ENCODE measurements at regions of chr4 and their contacts with region 1.

Region 1: DNA sequence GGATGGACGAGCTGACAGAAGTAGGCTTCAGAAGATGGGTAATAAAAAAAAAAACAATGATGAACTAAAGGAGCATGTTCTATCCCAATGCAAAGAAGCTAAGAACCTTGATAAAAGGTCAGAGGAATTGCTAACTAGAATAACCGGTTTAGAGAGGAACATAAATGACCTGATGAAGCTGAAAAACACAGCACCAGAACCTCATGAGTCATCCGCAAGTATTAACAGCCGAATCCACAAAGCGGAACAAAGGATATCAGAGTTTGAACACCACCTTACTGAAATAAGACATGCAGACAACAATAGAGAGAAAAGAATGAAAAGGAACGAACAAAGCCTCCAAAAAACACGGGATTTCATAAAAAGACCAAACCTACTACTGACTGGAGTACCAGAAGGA is 10.5 kb downstream of the NELFA start:
- DNase-seq: no peak
- H3K4me3 Mint-ChIP-seq: no peak overlapping the region
- H3K27ac Mint-ChIP-seq: no peak overlapping the region
- H3K4me1 Mint-ChIP-seq: peaks cover 6% of the 10 kb centered on the region
- H3K27me3 Mint-ChIP-seq: no peaks in the 10 kb centered on the region
- CTCF ChIP-seq: no peak

Region 2: GRCh38 chr4:1777822-1778641 is 220.3 kb before region 1 on chr4:
- CTCF ChIA-PET with region 1: no interaction called
- POLR2A ChIA-PET with region 1: no interaction called
- intact Hi-C with region 1: no loop called
- DNase-seq: peak; percentile 62
- H3K4me3 Mint-ChIP-seq: no peak overlapping the region
- H3K27ac Mint-ChIP-seq: no peak overlapping the region
- H3K4me1 Mint-ChIP-seq: peaks cover 6% of the 10 kb centered on the region
- H3K27me3 Mint-ChIP-seq: no peaks in the 10 kb centered on the region
- CTCF ChIP-seq: no peak

Region 3: DNA sequence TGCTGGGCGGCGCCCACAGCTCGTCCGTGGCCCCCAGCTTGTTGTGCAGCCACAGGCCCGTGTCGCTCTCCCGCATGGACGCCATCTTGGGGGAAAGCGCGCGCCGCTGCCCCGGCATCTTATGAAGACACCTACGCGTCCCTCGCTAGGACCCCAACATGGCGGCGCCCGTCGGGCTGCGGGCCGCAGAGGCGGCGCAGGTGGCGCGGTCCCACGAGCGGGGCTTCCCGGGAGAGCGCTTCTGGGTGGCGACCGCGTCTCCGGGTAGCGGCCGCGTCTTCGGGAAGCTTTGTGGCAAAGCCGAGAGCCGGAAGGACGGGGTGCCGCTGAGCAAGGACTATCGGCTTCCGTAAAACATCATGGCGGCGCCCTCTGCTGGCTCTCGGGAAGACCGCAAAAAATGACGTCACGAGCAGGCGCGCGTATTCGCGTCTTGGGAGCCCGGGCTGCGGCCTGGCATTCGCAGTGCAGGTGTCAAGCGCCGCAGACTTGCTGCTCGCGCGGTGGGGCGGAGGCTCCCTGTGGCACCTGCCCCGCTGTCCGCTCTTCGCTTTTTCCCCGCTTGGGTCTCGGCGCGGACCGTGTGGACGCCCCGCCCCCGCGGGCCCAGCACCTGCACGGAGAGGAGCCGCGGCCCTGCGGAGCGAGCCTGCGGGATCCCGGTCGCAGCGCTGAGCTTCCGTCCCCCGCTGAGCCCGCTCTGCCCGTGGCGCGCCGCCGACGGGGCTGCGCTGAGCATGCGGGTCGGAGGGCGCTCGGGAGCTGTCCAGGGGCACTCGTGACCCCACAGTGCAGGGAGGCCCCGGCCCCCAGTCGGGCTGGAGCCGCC is 10.8 kb after region 1 on chr4 and contains the start of gene NELFA:
- CTCF ChIA-PET with region 1: interaction called, 3 read pairs
- POLR2A ChIA-PET with region 1: interaction called, 10 read pairs
- intact Hi-C with region 1: no loop called
- DNase-seq: peak; percentile 96
- H3K4me3 Mint-ChIP-seq: peak within 1 kb of the TSS; percentile 80
- H3K27ac Mint-ChIP-seq: peak within 1 kb of the TSS; percentile 90
- H3K4me1 Mint-ChIP-seq: peaks cover 18% of the 10 kb centered on the region
- H3K27me3 Mint-ChIP-seq: no peaks in the 10 kb centered on the region
- CTCF ChIP-seq: no peak
- total RNA-seq, gene NELFA: 30.1 and 36.2 TPM in 2 replicates

Region 4: GRCh38 chr4:2630556-2631273 is 632.4 kb after region 1 on chr4:
- CTCF ChIA-PET with region 1: no interaction called
- POLR2A ChIA-PET with region 1: no interaction called
- intact Hi-C with region 1: no loop called
- DNase-seq: no peak
- H3K4me3 Mint-ChIP-seq: no peak overlapping the region
- H3K27ac Mint-ChIP-seq: no peak overlapping the region
- H3K4me1 Mint-ChIP-seq: no peaks in the 10 kb centered on the region
- H3K27me3 Mint-ChIP-seq: no peaks in the 10 kb centered on the region
- CTCF ChIP-seq: no peak

Measured in MCF 10A (cell line).